G401 (cell line): ENCODE measurements at regions of chr7 and their contacts with region 1.

Region 1: DNA sequence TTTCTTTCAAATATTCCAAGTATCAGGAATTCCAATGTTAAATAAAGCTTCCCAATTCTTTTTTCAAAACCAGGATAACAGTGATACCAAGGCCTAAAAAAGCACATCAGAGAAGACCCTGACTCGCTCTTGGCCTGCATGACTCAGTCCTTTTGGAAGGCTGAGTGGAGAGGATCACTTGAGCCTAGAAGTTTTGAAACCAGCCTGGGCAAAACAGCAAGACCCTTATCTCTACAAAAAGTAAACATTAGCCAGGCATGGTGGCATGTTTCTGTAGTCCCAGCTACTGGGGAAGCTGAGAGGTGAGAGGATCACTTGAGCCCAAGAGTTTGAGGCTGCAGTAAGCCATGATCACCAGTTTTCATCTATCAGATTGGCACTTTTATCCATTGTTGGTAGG is 18.7 kb downstream of the NFE2L3 start:
- DNase-seq: no peak

Region 2: GRCh38 chr7:26112203-26112740 is 58.4 kb before region 1 on chr7:
- in situ Hi-C with region 1: loop called (anchors 5 kb)
- DNase-seq: no peak

Region 3: DNA sequence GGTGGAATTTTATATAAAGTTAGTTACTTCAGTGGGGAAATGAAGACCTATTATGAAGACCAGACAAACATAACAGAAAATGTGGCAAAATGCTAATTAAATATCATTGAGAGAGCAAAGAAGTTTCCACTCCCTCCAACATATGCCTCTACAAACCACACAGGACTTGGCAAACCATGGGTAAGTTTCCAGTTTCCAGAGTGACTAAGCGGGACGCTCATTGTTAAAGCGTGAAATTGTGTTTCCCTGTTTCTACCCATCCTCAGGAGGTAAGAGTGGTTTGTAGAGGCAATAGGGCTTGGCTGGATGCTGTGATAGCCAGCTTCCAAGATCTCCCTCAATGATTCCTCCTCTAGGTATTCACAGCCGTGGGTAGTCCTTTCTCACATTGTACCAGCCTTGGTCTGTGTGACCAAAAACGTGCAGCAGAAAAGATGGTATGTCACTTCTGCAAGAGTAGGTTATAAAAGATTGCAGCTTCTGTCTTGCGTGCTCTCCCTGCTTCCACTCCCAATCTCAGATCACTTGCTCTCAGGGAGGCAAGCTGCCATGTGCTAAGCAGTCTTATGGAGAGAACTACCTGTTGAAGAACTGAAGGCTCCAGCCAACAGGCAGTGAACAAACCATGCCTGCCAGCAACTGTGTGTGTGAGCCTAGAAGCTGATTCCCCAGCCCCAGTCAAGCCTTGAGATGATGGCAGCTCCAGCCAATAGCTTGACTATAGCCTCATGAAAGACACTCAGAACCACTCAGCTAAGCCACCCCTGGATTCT is 66.6 kb after region 1 on chr7:
- in situ Hi-C with region 1: no loop called
- DNase-seq: peak; percentile 8

Region 4: GRCh38 chr7:26278770-26279169 is 108.1 kb after region 1 on chr7:
- in situ Hi-C with region 1: no loop called
- DNase-seq: peak; percentile 36